ENCODE measurements at regions of chr7 and their contacts with region 1.

Region 1: GRCh38 chr7:102396027-102397019 is at the start of gene PRKRIP1:
- DNase-seq: peak; percentile 72
- ATAC-seq: peak; percentile 98
- H3K4me3 Mint-ChIP-seq: peak within 1 kb of the TSS; percentile 93
- H3K27ac Mint-ChIP-seq: peak within 1 kb of the TSS; percentile 96
- H3K4me1 Mint-ChIP-seq: peaks cover 34% of the 10 kb centered on the region
- H3K27me3 Mint-ChIP-seq: no peaks in the 10 kb centered on the region
- CTCF ChIP-seq: no peak
- total RNA-seq, gene PRKRIP1: 38.8 and 39.7 TPM in 2 replicates

Region 2: DNA sequence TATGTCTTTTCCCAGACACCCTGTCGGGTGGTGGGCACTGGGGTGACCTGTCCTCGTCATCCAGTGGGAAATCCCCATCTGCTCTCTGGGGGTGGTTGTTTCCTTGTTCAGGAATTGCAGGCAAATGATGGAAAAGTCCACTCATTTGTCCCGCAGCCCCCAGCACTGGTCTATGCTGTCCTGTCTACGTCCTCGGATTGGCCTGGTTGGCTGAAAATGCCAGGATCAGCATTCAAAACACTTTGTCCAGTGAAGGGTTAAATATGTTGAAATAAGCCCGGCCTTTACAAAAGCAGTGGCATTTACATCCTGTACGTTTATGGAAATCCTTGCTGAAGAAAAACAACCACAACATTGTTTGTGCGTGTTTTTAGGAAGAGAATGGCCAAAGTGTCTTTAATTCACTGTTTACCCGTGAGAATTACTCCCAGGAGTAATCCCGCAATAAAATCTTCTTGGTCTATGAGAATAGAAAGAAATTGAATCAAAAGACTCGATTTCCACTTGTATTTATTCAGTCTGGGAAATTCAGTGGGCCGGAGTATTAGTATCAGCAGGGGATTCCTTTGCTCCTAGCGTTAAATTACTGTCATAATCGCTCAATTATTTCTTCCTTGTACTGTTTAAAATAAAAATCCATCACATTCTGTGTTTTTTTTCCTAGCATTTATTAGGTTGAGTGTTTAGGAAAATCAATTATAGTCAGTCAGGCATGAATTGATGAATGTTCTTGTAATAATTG is 226.5 kb before region 1 on chr7:
- CTCF ChIA-PET with region 1: no interaction called
- POLR2A ChIA-PET with region 1: no interaction called
- intact Hi-C with region 1: no loop called
- DNase-seq: no peak
- ATAC-seq: no peak
- H3K4me3 Mint-ChIP-seq: no peak overlapping the region
- H3K27ac Mint-ChIP-seq: no peak overlapping the region
- H3K4me1 Mint-ChIP-seq: no peaks in the 10 kb centered on the region
- H3K27me3 Mint-ChIP-seq: no peaks in the 10 kb centered on the region
- CTCF ChIP-seq: no peak

Region 3: DNA sequence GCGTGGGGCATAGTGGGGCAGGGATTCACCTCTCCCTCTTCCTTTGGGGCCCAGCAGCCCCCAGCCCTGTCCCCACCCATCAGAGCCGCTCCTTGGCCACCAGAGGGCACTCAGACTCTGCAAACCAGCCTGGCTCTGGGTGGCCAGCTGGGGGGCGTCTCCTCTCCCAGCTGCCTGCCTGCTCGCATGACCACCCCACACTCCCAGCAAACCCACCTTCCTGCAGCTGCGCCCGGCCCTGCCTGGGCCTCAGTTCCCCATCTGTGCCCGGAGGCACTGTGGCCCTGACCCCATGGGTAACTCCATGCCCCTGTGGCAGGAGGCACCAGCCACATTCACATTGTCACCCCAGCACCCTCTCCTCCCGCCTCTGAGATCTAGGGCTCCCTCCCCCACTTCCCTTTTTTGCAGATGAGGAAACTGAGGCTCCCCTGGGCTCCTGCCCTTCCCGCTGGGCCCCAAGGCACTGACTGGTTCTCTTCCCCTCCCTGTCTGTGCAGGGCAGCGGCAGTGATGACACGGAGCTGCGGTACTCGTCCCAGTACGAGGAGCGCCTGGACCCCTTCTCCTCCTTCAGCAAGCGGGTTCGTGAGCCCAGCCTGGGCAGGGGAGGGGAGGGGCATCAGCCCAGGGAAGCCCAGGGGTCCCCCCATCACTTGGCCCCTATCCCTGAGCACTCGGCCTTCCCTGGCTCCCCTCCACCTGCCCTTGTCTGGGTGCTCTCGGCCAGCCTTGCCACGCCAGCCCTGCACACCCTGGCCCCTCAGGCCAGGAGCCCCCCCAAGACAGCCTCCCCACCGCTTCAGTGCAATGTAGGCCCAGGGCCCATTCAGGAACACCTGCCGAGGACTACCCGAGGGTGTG is 116.6 kb before region 1 on chr7:
- CTCF ChIA-PET with region 1: interaction called, 91 read pairs
- POLR2A ChIA-PET with region 1: interaction called, 6 read pairs
- intact Hi-C with region 1: no loop called
- DNase-seq: peak; percentile 65
- ATAC-seq: peak; percentile 94
- H3K4me3 Mint-ChIP-seq: peak overlapping the region; percentile 71
- H3K27ac Mint-ChIP-seq: peak overlapping the region; percentile 76
- H3K4me1 Mint-ChIP-seq: peaks cover 36% of the 10 kb centered on the region
- H3K27me3 Mint-ChIP-seq: no peaks in the 10 kb centered on the region
- CTCF ChIP-seq: peak; percentile 24

Region 4: DNA sequence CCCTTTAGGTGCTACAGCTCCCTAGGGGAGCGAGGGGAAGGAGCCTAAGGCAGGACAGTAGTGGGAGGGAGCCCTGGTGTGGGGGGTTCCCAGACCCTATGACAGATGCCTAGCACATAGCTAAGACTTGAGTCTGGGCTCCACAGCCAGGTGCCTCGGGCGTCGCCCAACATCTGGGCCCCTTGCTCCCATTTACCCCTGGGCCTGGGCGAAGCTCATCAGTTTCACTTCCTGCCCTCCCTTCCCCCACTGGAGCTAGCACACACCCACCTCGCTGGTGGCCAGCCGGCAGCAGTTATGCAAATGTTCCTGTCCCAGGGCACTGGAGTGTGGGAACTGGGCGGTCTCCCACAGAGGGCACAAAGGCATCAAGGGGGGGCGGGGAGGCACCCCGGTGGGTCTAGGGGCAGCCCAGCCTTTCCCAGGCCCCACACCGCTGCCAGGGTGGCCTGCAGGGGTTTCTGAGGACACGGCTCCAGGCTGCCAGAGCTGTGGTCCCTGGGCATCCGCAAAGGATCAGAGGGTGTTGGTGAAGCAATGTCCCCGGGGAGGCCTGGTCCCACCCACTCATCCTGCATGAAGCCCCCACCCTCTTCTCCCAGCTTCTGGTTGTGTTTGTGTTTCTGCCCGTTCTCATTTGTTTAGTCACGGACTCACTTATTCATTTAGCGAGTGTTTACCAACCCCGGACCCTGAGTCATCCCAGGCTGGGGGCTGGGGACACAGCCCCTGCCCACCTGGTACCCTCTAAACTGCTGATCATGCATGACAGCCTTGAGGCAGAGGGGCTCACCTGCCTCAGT is 89.2 kb before region 1 on chr7:
- CTCF ChIA-PET with region 1: interaction called, 3 read pairs
- POLR2A ChIA-PET with region 1: interaction called, 13 read pairs
- intact Hi-C with region 1: loop called (anchors 1 kb)
- DNase-seq: peak; percentile 80
- ATAC-seq: peak; percentile 88
- H3K4me3 Mint-ChIP-seq: peak overlapping the region; percentile 74
- H3K27ac Mint-ChIP-seq: peak overlapping the region; percentile 92
- H3K4me1 Mint-ChIP-seq: peaks cover 85% of the 10 kb centered on the region
- H3K27me3 Mint-ChIP-seq: no peaks in the 10 kb centered on the region
- CTCF ChIP-seq: no peak

Region 5: DNA sequence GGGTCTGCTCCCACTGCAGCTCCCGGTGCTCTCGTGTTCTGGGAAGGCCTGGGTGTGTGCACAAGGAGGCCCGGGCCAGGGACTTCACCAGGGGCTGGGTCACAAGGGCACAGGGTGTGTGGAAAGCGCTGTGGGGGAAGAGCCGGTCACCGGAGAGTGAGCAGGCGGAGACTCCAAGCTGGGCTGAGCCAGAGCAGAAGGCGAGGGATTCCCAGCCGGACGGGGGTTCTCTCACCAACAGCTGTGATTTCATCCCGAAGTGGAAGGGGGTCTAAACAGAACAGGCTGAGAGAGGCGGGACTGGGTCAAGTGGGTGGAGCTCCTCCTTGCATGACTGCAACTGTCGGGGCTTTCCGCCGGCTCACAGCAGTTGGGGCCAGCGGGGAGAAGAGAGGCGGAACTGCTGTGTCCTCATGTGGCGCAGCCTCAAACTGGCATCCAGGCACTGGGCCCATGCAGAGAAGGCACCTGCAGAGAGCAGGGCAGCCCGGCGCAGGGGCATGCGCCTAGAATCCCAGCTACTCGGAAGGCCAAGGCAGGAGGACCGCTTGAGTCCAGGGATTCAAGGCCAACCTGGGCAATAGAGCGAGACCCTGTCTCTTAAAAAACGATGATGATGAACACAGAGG is 29.4 kb after region 1 on chr7:
- CTCF ChIA-PET with region 1: no interaction called
- POLR2A ChIA-PET with region 1: interaction called, 20 read pairs
- intact Hi-C with region 1: loop called (anchors 1 kb)
- DNase-seq: peak; percentile 81
- ATAC-seq: peak; percentile 76
- H3K4me3 Mint-ChIP-seq: peak overlapping the region; percentile 76
- H3K27ac Mint-ChIP-seq: peak overlapping the region; percentile 100
- H3K4me1 Mint-ChIP-seq: peaks cover 95% of the 10 kb centered on the region
- H3K27me3 Mint-ChIP-seq: no peaks in the 10 kb centered on the region
- CTCF ChIP-seq: no peak

Region 6: GRCh38 chr7:102440078-102440795 is 43.9 kb after region 1 on chr7:
- CTCF ChIA-PET with region 1: no interaction called
- POLR2A ChIA-PET with region 1: interaction called, 14 read pairs
- intact Hi-C with region 1: no loop called
- DNase-seq: no peak
- ATAC-seq: no peak
- H3K4me3 Mint-ChIP-seq: no peak overlapping the region
- H3K27ac Mint-ChIP-seq: peak overlapping the region; percentile 93
- H3K4me1 Mint-ChIP-seq: peaks cover 67% of the 10 kb centered on the region
- H3K27me3 Mint-ChIP-seq: no peaks in the 10 kb centered on the region
- CTCF ChIP-seq: no peak

Region 7: GRCh38 chr7:102464577-102465280 is 68.4 kb after region 1 on chr7 and contains the starts of genes ALKBH4 and LRWD1:
- CTCF ChIA-PET with region 1: interaction called, 3 read pairs
- POLR2A ChIA-PET with region 1: interaction called, 3 read pairs
- intact Hi-C with region 1: loop called (anchors 1 kb)
- DNase-seq: peak; percentile 96
- ATAC-seq: peak; percentile 96
- H3K4me3 Mint-ChIP-seq: peak within 1 kb of the TSS; percentile 90
- H3K27ac Mint-ChIP-seq: peak within 1 kb of the TSS; percentile 72
- H3K4me1 Mint-ChIP-seq: peaks cover 33% of the 10 kb centered on the region
- H3K27me3 Mint-ChIP-seq: no peaks in the 10 kb centered on the region
- CTCF ChIP-seq: no peak
- total RNA-seq, gene ALKBH4: 7.8 and 8.1 TPM in 2 replicates
- total RNA-seq, gene LRWD1: 20.6 and 28.8 TPM in 2 replicates